Endothelial cell of umbilical vein (primary cell): ENCODE measurements at regions of chr14 and their contacts with region 1.

Region 1: DNA sequence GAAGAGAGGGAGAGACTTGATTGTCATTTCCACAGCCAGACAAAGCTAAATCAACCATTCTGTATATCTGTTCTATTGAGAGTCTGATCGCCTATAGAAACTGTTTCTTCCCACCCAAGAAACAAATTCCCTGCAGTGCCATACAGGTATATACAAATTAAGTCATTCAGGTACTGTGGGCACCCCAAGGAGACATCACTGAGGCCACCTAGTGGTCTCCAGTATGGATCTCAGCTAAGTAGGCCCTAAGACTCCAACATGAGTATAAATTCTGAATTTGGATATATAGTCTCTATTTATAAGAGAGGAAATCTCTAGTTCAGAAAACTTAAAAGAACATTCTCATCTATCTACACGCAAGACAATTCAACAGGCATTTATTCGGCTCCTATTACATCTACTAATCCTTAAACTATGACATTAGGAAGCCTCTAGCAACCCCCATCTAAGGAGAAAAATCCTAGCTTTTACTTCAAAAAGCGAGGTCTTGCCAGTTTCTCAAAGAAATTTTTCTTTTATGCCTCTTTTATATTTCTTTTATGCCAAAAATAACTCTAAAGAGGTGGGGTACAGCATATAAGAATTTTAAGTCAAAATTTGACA is 62.6 kb downstream of the DCAF5 start:
- DNase-seq: peak; percentile 59
- H3K4me3 ChIP-seq: no peak overlapping the region
- H3K27ac ChIP-seq: no peak overlapping the region
- H3K4me1 ChIP-seq: peaks cover 19% of the 10 kb centered on the region
- H3K27me3 ChIP-seq: no peaks in the 10 kb centered on the region
- CTCF ChIP-seq: peak; percentile 57 to 66
- POLR2A ChIP-seq: no peak

Region 2: GRCh38 chr14:68841016-68841809 is 249.1 kb before region 1 on chr14:
- CTCF ChIA-PET with region 1: no interaction called
- POLR2A ChIA-PET with region 1: no interaction called
- dilution Hi-C with region 1: no loop called
- intact Hi-C with region 1: no loop called
- DNase-seq: peak; percentile 89
- H3K4me3 ChIP-seq: no peak overlapping the region
- H3K27ac ChIP-seq: peak overlapping the region; percentile 63
- H3K4me1 ChIP-seq: peaks cover 14% of the 10 kb centered on the region
- H3K27me3 ChIP-seq: no peaks in the 10 kb centered on the region
- CTCF ChIP-seq: no peak
- POLR2A ChIP-seq: no peak

Region 3: DNA sequence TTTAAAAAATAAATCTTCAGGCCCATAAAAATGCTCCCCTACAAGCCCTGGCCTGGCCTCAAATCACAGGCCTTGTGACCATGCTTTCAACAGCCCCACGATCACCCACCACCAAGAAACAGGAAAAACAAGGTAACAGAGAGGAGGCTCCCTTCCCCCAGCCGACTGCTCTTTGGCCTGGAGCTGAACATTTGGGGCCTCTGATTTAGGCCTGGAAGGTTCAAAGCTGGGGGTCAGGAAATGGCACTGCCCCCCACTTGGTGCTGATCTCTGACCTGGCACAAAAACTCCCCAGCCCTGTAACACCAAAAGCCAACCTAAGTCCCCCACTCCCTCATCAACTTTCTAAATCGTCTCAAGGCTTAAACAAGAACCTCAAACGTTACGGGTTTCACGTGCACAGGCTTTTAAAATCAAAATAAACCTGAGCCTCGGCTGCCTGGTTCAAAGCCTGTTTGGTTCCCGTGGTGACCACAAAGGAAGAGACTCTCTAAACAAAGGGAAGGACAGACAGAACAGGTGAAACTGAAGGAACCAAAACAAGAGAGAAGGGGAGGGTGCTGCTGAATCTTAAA is 120.2 kb before region 1 on chr14:
- CTCF ChIA-PET with region 1: interaction called, 10 read pairs
- POLR2A ChIA-PET with region 1: no interaction called
- dilution Hi-C with region 1: no loop called
- intact Hi-C with region 1: no loop called
- DNase-seq: peak; percentile 41
- H3K4me3 ChIP-seq: no peak overlapping the region
- H3K27ac ChIP-seq: peak overlapping the region; percentile 62
- H3K4me1 ChIP-seq: peaks cover 65% of the 10 kb centered on the region
- H3K27me3 ChIP-seq: no peaks in the 10 kb centered on the region
- CTCF ChIP-seq: no peak
- POLR2A ChIP-seq: no peak

Region 4: GRCh38 chr14:69043596-69044260 is 46.6 kb before region 1 on chr14:
- CTCF ChIA-PET with region 1: interaction called, 24 read pairs
- POLR2A ChIA-PET with region 1: no interaction called
- dilution Hi-C with region 1: no loop called
- intact Hi-C with region 1: no loop called
- DNase-seq: peak; percentile 56
- H3K4me3 ChIP-seq: no peak overlapping the region
- H3K27ac ChIP-seq: peak overlapping the region; percentile 39
- H3K4me1 ChIP-seq: peaks cover 60% of the 10 kb centered on the region
- H3K27me3 ChIP-seq: no peaks in the 10 kb centered on the region
- CTCF ChIP-seq: no peak
- POLR2A ChIP-seq: no peak

Region 5: GRCh38 chr14:69079183-69079742 is 11.0 kb before region 1 on chr14:
- CTCF ChIA-PET with region 1: interaction called, 11 read pairs
- POLR2A ChIA-PET with region 1: no interaction called
- dilution Hi-C with region 1: no loop called
- intact Hi-C with region 1: loop called (anchors 1 kb)
- DNase-seq: peak; percentile 94
- H3K4me3 ChIP-seq: peak overlapping the region in 1 of 3 experiments; percentile 33
- H3K27ac ChIP-seq: peak overlapping the region; percentile 100
- H3K4me1 ChIP-seq: peaks cover 47% of the 10 kb centered on the region
- H3K27me3 ChIP-seq: no peaks in the 10 kb centered on the region
- CTCF ChIP-seq: no peak
- POLR2A ChIP-seq: no peak

Region 6: GRCh38 chr14:69153131-69153872 is 63.0 kb after region 1 on chr14:
- CTCF ChIA-PET with region 1: no interaction called
- POLR2A ChIA-PET with region 1: no interaction called
- dilution Hi-C with region 1: no loop called
- intact Hi-C with region 1: no loop called
- DNase-seq: peak; percentile 89
- H3K4me3 ChIP-seq: peak overlapping the region; percentile 81 to 97 (median 83)
- H3K27ac ChIP-seq: peak overlapping the region; percentile 55
- H3K4me1 ChIP-seq: peaks cover 26% of the 10 kb centered on the region
- H3K27me3 ChIP-seq: no peaks in the 10 kb centered on the region
- CTCF ChIP-seq: no peak
- POLR2A ChIP-seq: peak; percentile 61